Naive thymus-derived CD4-positive, alpha-beta T cell (primary cell): ENCODE measurements at regions of chr6 and their contacts with region 1.

Region 1: DNA sequence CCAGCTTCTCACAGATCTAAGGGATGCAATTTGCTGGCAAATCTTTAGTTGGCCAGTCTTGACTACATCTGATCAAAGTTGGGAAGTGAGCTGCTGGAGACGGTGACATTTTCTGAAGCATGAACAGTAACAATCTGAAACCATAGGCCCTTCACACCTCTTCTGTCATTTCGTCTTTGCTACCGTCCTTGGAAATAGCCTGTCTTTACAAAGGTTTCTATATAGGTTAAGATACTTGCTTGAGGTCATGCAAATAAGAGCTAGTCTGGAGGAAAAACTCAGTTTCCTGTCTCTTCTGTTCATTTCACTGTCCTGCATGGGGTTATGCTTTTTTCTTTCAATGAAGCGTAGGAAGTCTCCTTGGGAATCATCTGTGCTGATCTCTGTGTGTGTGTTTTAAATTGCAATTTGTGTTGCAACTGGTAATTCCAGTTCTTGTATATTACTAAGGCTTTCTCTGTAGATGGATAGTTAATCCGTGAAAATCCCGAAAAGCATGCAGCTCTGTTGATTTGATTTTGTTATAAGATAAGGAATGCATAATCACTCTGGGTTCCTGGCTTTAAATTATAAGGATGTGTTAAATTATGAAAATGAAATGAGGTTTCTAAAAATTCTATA is 55.7 kb downstream of the CARMIL1 start:
- DNase-seq: no peak
- ATAC-seq: no peak
- H3K4me3 ChIP-seq: no peak overlapping the region
- H3K4me3 Mint-ChIP-seq: no peak overlapping the region
- H3K27ac ChIP-seq: no peak overlapping the region
- H3K27ac Mint-ChIP-seq: no peak overlapping the region
- H3K4me1 ChIP-seq: peaks cover 0 to 9% of the 10 kb centered on the region in 2 donors
- H3K4me1 Mint-ChIP-seq: peaks cover 0 to 75% (median 50%) of the 10 kb centered on the region in 7 donors
- H3K27me3 ChIP-seq: no peaks in the 10 kb centered on the region
- H3K27me3 Mint-ChIP-seq: peaks cover 0 to 6% (median 0%) of the 10 kb centered on the region in 5 donors

Region 2: GRCh38 chr6:25147223-25147622 is 187.7 kb before region 1 on chr6:
- CTCF ChIA-PET with region 1: no interaction called
- POLR2A ChIA-PET with region 1: no interaction called
- intact Hi-C with region 1: no loop called
- DNase-seq: no peak
- ATAC-seq: no peak
- H3K4me3 ChIP-seq: no peak overlapping the region
- H3K4me3 Mint-ChIP-seq: peak overlapping the region in 1 of 10 donors; percentile 62
- H3K27ac ChIP-seq: no peak overlapping the region
- H3K27ac Mint-ChIP-seq: peak overlapping the region in 1 of 9 donors; percentile 74
- H3K4me1 ChIP-seq: no peaks in the 10 kb centered on the region
- H3K4me1 Mint-ChIP-seq: peaks cover 0 to 65% (median 0%) of the 10 kb centered on the region in 7 donors
- H3K27me3 ChIP-seq: no peaks in the 10 kb centered on the region
- H3K27me3 Mint-ChIP-seq: no peaks in the 10 kb centered on the region

Region 3: DNA sequence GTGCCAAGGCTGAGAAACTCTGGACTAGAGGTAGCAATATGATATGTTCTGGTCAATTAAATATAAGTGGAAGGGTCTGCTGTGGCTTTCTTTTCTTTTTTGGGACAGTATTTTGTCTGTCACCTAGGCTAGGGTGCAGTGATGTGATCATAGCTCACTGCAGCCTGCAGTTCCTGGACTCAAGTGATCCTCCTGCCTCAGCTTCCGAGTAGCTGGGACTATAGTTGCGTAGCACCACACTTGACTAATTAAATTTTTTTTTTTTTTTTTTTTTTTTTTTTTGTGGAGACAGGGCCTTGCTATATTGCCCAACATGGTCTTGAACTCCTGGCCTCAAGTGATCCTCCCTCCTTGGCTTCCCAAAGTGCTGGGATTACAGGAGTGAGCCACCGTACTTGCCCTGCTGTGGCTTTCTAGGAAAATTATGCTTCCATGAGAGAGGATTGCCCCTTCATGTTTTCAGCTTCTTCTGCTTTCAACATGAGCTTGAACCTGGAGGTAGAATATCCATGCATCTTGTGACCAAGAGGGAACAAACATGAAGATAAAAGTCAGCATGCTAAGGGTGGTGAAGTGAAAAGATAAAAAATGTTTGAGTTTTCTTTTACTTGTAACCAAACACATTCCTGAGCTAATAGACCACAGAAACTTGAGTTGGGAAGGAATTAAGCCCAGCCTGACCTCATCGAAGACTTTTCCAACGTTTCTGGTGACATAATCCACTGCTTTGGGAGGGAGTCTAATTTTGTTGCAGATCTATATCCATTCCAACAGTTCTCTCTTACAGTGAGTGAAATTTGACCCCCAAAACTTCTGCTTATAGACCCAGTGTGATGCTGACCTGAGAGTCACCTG is 19.4 kb after region 1 on chr6:
- CTCF ChIA-PET with region 1: interaction called, 4 read pairs
- POLR2A ChIA-PET with region 1: no interaction called
- intact Hi-C with region 1: loop called in 1 of 2 experiments (anchors 2 kb)
- DNase-seq: no peak
- ATAC-seq: no peak
- H3K4me3 ChIP-seq: no peak overlapping the region
- H3K4me3 Mint-ChIP-seq: no peak overlapping the region
- H3K27ac ChIP-seq: no peak overlapping the region
- H3K27ac Mint-ChIP-seq: no peak overlapping the region
- H3K4me1 ChIP-seq: peaks cover 0 to 8% of the 10 kb centered on the region in 2 donors
- H3K4me1 Mint-ChIP-seq: peaks cover 6 to 62% (median 42%) of the 10 kb centered on the region in 7 donors
- H3K27me3 ChIP-seq: no peaks in the 10 kb centered on the region
- H3K27me3 Mint-ChIP-seq: no peaks in the 10 kb centered on the region